ENCODE measurements at regions of chr10 and their contacts with region 1.

Region 1: GRCh38 chr10:86376852-86377796 is 10.5 kb upstream of the GRID1 start:
- DNase-seq: peak; percentile 85
- ATAC-seq: peak; percentile 95
- H3K4me3 Mint-ChIP-seq: no peak overlapping the region
- H3K27ac Mint-ChIP-seq: no peak overlapping the region
- H3K4me1 Mint-ChIP-seq: no peaks in the 10 kb centered on the region
- H3K27me3 Mint-ChIP-seq: peaks cover 49% of the 10 kb centered on the region
- CTCF ChIP-seq: peak; percentile 99

Region 2: DNA sequence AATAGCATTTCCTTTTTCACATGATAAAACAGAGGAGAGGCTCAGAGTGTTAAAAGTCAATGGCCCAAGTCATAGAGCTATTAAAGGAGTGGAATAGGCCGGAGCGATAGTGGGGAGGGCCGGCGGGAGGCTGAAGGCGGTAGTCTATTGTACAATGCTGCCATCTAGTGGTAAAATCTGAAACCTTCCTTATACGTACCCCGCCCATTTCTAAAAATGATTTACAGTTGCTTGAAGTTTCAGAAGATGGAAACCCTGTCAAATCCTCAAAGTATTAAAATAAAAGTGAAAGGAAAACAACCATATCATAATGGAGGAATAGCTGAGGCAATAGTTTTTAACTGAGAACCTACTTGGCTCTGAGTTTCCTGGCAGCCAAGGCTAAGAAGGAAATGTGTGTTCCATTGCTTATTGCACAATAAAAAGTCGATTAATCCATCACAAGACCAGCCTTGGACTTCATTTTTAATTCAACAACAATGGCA is 1839.6 kb before region 1 on chr10:
- CTCF ChIA-PET with region 1: interaction called, 7 read pairs
- POLR2A ChIA-PET with region 1: no interaction called
- intact Hi-C with region 1: loop called (anchors 1 kb)
- DNase-seq: no peak
- ATAC-seq: peak; percentile 79
- H3K4me3 Mint-ChIP-seq: no peak overlapping the region
- H3K27ac Mint-ChIP-seq: no peak overlapping the region
- H3K4me1 Mint-ChIP-seq: peaks cover 8% of the 10 kb centered on the region
- H3K27me3 Mint-ChIP-seq: peaks cover 33% of the 10 kb centered on the region
- CTCF ChIP-seq: peak; percentile 41

Region 3: GRCh38 chr10:84665883-84666463 is 1711.2 kb before region 1 on chr10:
- CTCF ChIA-PET with region 1: no interaction called
- POLR2A ChIA-PET with region 1: no interaction called
- intact Hi-C with region 1: loop called (anchors 5 kb)
- DNase-seq: no peak
- ATAC-seq: no peak
- H3K4me3 Mint-ChIP-seq: no peak overlapping the region
- H3K27ac Mint-ChIP-seq: no peak overlapping the region
- H3K4me1 Mint-ChIP-seq: no peaks in the 10 kb centered on the region
- H3K27me3 Mint-ChIP-seq: peaks cover 6% of the 10 kb centered on the region
- CTCF ChIP-seq: no peak

Region 4: GRCh38 chr10:85791818-85792532 is 585.1 kb before region 1 on chr10:
- CTCF ChIA-PET with region 1: no interaction called
- POLR2A ChIA-PET with region 1: no interaction called
- intact Hi-C with region 1: loop called (anchors 2 kb)
- DNase-seq: no peak
- ATAC-seq: no peak
- H3K4me3 Mint-ChIP-seq: no peak overlapping the region
- H3K27ac Mint-ChIP-seq: no peak overlapping the region
- H3K4me1 Mint-ChIP-seq: no peaks in the 10 kb centered on the region
- H3K27me3 Mint-ChIP-seq: peaks cover 2% of the 10 kb centered on the region
- CTCF ChIP-seq: no peak

Region 5: GRCh38 chr10:86585037-86585725 is 208.1 kb after region 1 on chr10:
- CTCF ChIA-PET with region 1: interaction called, 4 read pairs
- POLR2A ChIA-PET with region 1: no interaction called
- intact Hi-C with region 1: loop called (anchors 1 kb)
- DNase-seq: peak; percentile 67
- ATAC-seq: peak; percentile 97
- H3K4me3 Mint-ChIP-seq: no peak overlapping the region
- H3K27ac Mint-ChIP-seq: no peak overlapping the region
- H3K4me1 Mint-ChIP-seq: no peaks in the 10 kb centered on the region
- H3K27me3 Mint-ChIP-seq: peaks cover 10% of the 10 kb centered on the region
- CTCF ChIP-seq: peak; percentile 62

Measured in activated B cell treated with CpG ODN at 0.5 μM for 24 hours (primary cell).